H1 (cell line): ENCODE measurements at regions of chr7 and their contacts with region 1.

Region 1: DNA sequence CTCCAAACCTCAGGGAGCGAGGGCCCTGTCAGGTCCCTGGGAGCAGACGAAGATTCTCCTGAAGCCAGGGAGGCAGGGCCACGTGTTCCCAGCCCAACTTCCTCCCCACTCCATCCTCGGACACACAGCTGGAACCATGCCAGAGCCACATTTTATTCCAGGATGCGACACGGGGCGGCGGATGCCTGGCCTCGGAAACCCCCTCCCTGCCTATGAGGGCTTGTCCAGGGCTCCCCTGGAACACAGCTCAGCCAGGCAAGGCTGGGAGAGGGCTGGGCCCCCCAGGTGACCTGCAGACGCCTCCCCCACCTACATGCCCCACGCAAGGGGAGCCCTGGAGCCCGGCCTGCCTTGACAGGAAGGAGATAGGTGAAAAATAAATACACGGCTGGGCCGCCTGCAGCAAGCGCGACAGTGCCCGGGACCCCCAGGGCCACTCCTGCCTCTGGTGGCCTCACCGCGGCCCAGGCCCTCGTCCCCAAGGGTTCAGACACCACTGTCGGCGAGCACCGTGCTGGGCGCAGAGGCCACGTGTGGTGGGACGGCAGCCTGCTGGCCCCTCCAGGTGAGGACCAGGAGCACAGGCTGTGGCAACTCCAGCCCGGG is 21.5 kb downstream of the GET4 start:
- DNase-seq: no peak
- H3K4me3 ChIP-seq: no peak overlapping the region
- H3K27ac ChIP-seq: no peak overlapping the region
- H3K4me1 ChIP-seq: peaks cover 0 to 8% (median 4%) of the 10 kb centered on the region in 4 experiments; a peak in 5 of 7 replicates
- H3K27me3 ChIP-seq: no peaks in the 10 kb centered on the region
- CTCF ChIP-seq: no peak
- EP300 ChIP-seq: no peak
- POLR2A ChIP-seq: no peak
- RAD21 ChIP-seq: no peak

Region 2: GRCh38 chr7:883055-884021 is 14.5 kb before region 1 on chr7:
- CTCF ChIA-PET with region 1: interaction called, 7 read pairs
- POLR2A ChIA-PET with region 1: interaction called, 23 read pairs
- DNase-seq: no peak
- H3K4me3 ChIP-seq: no peak overlapping the region
- H3K27ac ChIP-seq: no peak overlapping the region
- H3K4me1 ChIP-seq: peaks cover 0 to 2% (median 0%) of the 10 kb centered on the region in 4 experiments; a peak in 1 of 7 replicates
- H3K27me3 ChIP-seq: no peaks in the 10 kb centered on the region
- CTCF ChIP-seq: no peak
- EP300 ChIP-seq: no peak
- POLR2A ChIP-seq: no peak
- RAD21 ChIP-seq: no peak